ENCODE measurements at regions of chr5 and their contacts with region 1.

Region 1: GRCh38 chr5:129284010-129284409 is 176.1 kb upstream of the ADAMTS19 start:
- DNase-seq: no peak

Region 2: DNA sequence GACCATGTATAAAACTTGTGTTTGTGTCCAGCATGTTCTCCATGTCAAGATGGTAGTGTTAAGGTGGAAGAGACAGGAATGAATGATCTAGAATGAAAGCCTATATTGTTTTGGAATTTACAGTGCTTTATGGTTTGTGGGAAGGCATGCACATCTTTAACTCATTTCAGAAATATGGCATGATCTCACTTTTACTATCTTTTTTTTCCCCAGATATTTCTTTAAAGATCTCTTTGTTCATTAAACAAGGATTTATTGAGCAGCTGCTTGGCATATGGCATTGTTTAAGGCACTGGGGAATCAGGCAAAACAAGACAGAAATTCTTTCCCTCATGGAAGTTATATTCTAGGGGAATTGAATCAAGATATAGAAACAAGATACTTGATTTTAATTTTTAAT is 1148.7 kb before region 1 on chr5:
- intact Hi-C with region 1: loop called in 1 of 2 experiments (anchors 10 kb)
- DNase-seq: no peak

Region 3: DNA sequence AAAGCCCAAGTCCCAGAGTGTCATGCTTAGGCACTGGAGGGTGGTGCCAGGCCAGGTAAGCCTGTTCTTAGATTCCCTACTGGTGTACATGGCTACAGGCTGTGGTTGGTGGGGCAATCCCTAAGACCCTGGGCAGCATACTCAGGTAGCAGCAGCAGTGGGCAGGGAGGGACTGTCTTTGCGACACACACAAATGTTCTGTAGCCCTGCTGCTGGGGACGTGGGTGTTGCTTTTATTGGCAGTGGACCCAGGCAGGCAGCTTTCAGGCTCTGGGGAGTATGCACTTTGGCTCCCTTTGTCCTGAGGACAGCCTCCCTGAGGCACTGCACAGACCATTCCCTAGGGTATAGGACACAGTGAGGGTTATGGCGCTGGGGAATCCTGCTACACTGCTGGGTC is 39.0 kb after region 1 on chr5:
- intact Hi-C with region 1: no loop called
- DNase-seq: no peak